ENCODE measurements at regions of chr5 and their contacts with region 1.

Region 1: DNA sequence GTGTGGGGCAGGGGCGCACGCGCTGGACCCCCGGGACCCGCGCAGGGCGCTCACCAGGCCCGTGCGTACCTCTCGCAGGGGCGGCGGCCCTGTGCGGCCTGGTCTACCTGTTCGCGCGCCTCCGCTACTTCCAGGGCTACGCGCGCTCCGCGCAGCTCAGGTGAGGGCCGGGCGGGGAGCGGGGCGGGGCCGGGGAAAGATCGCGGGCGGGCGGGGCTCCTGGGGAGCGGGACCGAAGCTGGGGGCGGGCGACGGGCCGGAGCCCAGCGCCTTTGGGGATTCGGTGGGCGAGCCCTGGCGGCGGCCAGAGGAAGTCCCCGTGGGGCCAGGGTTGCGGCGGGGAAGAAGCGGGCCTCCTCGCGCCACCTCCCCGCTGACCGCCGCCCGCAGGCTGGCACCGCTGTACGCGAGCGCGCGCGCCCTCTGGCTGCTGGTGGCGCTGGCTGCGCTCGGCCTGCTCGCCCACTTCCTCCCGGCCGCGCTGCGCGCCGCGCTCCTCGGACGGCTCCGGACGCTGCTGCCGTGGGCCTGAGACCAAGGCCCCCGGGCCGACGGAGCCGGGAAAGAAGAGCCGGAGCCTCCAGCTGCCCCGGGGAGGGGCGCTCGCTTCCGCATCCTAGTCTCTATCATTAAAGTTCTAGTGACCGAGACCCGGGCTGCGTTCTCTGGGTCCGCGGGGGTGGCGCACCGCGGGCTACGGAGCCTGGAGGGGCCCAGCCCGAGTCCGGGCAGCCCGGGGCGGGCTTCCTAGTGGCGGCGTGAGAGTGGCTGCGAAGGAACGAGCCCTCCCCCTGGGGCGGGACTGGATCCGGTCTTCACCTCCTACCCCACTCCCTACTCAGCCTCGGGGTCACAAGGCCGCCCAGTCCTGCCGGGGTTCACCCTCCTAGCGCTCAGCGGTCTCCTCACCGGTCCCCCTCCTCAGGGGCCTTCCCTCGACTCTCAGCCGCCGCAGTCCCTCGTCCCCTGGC is 2.4 kb downstream of the LTC4S start:
- DNase-seq: peak; percentile 93
- ATAC-seq: peak; percentile 77

Region 2: DNA sequence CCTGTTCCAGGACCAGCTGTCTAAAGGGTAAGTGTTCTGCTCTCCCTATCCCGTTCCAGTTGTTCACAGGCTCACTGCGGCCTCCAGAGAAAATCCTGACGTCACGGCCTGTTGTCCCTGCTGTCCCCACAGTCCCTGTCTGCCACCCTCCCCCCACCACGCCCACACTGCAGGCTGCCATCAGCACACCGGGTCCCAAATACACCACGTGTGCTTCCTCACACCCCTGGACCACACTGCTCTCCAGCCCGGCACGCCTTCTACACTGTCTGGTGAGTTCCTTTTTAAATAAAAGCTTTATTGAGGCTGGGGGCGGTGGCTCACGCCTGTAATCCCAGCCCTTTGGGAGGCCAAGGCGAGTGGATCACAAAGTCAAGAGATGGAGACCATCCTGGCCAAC is 334.1 kb before region 1 on chr5:
- intact Hi-C with region 1: no loop called
- DNase-seq: no peak
- ATAC-seq: no peak

Region 3: DNA sequence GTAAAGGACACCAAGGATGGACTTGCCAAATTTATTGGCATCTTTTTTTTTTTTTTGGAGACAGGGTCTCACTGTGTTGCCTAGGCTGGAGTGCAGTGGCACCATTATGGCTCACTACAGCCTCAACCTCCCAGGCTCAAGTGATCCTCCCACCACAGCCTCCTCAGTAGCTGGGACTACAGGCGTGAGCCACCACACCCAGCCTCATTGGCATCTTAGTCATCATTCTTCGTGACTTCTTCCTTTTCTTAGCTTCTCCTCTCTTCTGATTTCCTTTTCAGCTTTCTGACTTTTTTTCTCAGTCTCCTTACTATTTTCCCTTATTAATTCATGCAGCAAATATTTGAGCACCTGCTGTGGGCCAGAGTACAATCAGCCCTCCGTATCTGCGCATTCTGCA is 57.4 kb before region 1 on chr5:
- intact Hi-C with region 1: loop called (anchors 1 kb)
- DNase-seq: no peak
- ATAC-seq: no peak

Region 4: GRCh38 chr5:179763215-179763945 is 32.8 kb before region 1 on chr5:
- intact Hi-C with region 1: loop called (anchors 2 kb)
- DNase-seq: no peak
- ATAC-seq: no peak

Region 5: GRCh38 chr5:179852993-179853547 is 56.9 kb after region 1 on chr5:
- intact Hi-C with region 1: no loop called
- DNase-seq: no peak
- ATAC-seq: no peak

Region 6: DNA sequence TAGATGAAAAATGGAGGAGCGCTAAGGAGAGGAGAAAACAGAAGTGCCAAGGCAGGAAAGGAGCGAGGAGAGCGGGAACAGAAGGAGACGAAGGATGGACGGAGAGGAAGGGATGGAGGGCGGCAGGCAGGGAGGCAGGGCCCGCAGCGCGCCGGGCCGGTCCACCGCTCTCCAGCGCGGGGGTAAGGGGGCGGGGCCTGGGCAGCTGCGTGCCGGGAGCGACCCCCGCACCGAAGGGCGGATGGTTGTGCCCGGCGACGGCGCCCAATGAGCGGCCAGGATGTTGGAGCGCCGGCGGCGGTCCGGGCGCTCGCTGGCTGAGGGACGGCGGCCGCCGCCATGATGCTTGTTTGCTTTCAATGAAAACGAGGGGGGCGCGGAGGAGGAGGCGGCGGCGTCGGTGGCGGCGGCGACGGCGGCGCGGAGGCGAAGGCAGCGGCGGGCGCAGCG is 697.9 kb after region 1 on chr5 and contains the start of gene CNOT6:
- intact Hi-C with region 1: no loop called
- DNase-seq: peak; percentile 97
- ATAC-seq: peak; percentile 100
- total RNA-seq, gene CNOT6: 15.0 TPM

Measured in Right ventricle myocardium inferior (tissue), 1 donor.